Activated T-helper 1 cell treated with anti-CD3 and anti-CD28 coated beads, Interleukin-12 subunit alpha, Interleukin-12 subunit beta, Interleukin-2, Interleukin-4 antibody, amounts not matched to agents 30 ng/mL and 10 ng/mL and 1 ng/mL, durations not matched to agents 14 hours and 24 hours and 36 hours (primary cell): ENCODE measurements at regions of chr7 and their contacts with region 1.

Region 1: GRCh38 chr7:82729172-82730030 is 285.8 kb upstream of the CACNA2D1 start:
- DNase-seq: no peak
- H3K4me3 Mint-ChIP-seq: no peak overlapping the region
- H3K27ac Mint-ChIP-seq: no peak overlapping the region
- H3K4me1 Mint-ChIP-seq: no peaks in the 10 kb centered on the region
- H3K27me3 Mint-ChIP-seq: no peaks in the 10 kb centered on the region

Region 2: DNA sequence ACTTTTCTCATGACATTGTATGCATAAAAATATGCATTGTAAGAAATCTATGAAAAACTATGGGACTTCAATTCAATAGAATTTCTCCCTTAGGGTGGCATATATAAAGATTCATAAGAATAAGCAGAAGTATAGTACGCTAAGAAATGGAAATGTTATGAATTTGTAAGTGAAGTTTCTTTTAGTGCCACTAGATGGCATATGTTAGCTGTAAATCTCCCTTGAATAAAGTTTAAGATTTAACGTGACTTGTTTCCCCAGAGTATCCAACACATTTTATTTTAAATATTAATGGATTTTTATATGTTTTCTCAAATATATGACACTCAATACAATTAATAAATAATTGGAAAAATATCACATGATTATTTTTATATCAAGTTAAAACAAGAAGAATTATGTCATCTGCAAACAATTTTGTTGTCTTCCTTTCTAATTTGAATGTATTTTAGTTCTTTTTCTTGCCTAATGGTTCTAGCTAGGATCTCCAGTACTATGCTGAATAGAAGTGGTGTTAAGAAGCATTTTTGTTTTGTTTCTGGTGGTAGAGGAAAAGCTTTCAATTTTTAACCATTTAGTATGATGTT is 1246.7 kb before region 1 on chr7:
- intact Hi-C with region 1: loop called (anchors 2 kb)
- DNase-seq: no peak
- H3K4me3 Mint-ChIP-seq: no peak overlapping the region
- H3K27ac Mint-ChIP-seq: no peak overlapping the region
- H3K4me1 Mint-ChIP-seq: no peaks in the 10 kb centered on the region
- H3K27me3 Mint-ChIP-seq: no peaks in the 10 kb centered on the region

Region 3: DNA sequence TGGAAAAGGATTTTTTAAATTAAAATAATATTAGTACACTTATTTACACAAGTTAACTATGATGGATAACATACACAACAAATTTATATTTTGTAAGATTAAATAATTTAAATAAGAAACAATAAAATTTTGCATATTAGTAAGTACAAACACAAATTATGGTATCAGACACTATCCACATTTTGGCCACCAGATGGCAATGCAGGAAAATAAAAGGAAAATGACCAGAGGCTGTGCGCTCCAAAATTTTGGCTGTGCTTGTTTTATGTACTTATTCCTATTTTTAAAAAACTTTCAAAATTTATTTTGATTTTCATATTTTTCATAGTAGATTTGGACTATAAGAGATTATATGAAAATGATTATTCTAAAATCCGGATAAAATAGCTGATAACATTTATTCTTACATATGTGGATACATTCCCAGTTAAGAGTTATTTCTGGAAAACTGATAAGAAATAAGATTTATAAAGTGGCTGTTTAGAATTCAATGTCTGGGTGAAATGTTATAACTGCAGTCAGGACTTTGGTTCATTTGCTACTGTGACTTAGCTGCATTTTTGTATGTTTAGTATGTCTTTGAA is 684.8 kb before region 1 on chr7:
- intact Hi-C with region 1: loop called (anchors 1 kb)
- DNase-seq: no peak
- H3K4me3 Mint-ChIP-seq: no peak overlapping the region
- H3K27ac Mint-ChIP-seq: no peak overlapping the region
- H3K4me1 Mint-ChIP-seq: no peaks in the 10 kb centered on the region
- H3K27me3 Mint-ChIP-seq: no peaks in the 10 kb centered on the region

Region 4: DNA sequence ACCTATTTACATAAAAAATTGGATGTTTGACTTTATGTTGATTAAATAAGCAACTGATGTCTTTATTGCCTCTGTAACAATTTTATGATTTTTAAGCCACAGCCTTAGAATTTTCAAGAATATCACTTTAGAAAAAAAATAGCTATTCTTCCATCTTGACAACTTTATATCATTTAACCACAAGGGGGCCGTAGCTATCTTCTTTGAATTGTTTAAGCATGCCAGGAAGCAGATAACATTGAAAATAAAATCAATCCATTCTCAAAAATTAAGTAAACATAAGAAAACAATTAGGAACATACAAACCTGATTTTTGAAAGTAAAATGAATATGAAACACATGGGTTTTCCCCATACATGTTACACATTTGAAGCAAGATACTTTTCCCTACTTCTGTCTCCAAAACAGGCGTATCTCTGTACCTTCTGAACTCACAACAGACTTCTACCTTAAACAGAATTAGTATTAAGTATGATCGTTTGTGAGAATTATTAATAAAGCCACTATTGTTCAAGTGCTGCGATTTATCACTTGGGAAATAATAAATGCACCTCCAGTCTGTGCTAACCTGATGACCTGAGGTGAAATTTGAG is 494.8 kb before region 1 on chr7:
- intact Hi-C with region 1: loop called (anchors 5 kb)
- DNase-seq: no peak
- H3K4me3 Mint-ChIP-seq: no peak overlapping the region
- H3K27ac Mint-ChIP-seq: no peak overlapping the region
- H3K4me1 Mint-ChIP-seq: no peaks in the 10 kb centered on the region
- H3K27me3 Mint-ChIP-seq: no peaks in the 10 kb centered on the region

Region 5: DNA sequence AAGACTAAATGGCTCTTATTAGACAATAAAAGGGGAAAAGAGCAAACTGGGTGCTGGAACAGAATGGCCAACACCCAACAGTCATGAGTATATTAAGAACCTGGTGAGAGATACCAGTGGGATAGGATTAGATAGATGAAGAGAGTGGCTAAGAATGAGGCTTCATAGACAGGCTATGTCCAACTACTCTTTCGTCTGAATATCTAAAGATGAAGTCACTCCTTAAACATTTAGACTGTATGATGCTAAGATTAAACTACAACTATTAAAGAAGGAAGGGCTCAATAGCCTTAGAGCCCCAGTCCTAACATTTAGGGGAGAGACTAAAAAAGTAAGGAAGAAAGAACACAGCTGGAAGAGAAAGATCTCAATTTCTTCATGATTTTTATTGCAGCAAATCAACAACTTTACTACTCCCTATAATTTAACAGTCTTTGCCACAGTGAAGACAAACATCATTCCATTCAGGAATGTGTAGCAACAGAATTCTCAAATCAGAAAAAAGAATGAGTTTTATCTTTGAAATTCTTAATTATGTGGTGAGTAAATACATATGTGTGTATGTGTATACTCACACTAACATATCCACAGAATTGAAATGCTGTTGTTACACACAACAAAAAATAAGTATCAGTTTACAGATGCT is 331.4 kb before region 1 on chr7:
- intact Hi-C with region 1: no loop called
- DNase-seq: no peak
- H3K4me3 Mint-ChIP-seq: no peak overlapping the region
- H3K27ac Mint-ChIP-seq: no peak overlapping the region
- H3K4me1 Mint-ChIP-seq: no peaks in the 10 kb centered on the region
- H3K27me3 Mint-ChIP-seq: no peaks in the 10 kb centered on the region

Region 6: GRCh38 chr7:82605247-82605872 is 124.0 kb before region 1 on chr7:
- intact Hi-C with region 1: loop called (anchors 5 kb)
- DNase-seq: no peak
- H3K4me3 Mint-ChIP-seq: no peak overlapping the region
- H3K27ac Mint-ChIP-seq: no peak overlapping the region
- H3K4me1 Mint-ChIP-seq: no peaks in the 10 kb centered on the region
- H3K27me3 Mint-ChIP-seq: no peaks in the 10 kb centered on the region